ENCODE measurements at regions of chr17 and their contacts with region 1.

Region 1: DNA sequence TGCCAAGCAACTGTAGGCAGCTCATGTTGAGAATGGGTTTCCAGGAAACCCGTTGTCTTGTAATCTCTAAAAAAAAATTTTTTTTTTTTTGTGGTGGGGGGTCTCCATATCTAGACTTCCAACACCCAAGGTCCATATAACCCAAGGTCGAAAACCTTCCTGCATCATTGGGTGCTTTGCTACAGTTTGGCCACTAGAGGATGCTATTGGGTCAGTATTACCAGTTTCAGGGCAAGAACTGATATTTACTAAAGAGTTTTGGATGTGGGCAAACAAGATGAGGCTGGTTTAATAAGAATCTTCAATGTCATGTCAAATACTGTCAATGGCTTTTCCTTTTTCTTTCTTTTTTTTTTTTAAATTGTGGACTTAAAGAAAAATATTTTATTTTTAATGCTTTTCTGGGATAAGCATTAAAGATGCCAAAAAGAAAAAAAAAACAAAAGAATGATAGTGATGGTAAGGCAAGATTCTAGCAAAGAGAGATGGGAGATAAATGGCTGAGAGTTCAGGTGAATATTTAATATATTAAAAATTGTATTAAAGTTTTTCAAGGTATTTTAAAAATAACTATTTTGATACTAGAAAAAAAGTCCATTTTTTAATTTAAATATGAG is 62.2 kb downstream of the DHRS7C start:
- DNase-seq: no peak
- ATAC-seq: peak; percentile 63

Region 2: DNA sequence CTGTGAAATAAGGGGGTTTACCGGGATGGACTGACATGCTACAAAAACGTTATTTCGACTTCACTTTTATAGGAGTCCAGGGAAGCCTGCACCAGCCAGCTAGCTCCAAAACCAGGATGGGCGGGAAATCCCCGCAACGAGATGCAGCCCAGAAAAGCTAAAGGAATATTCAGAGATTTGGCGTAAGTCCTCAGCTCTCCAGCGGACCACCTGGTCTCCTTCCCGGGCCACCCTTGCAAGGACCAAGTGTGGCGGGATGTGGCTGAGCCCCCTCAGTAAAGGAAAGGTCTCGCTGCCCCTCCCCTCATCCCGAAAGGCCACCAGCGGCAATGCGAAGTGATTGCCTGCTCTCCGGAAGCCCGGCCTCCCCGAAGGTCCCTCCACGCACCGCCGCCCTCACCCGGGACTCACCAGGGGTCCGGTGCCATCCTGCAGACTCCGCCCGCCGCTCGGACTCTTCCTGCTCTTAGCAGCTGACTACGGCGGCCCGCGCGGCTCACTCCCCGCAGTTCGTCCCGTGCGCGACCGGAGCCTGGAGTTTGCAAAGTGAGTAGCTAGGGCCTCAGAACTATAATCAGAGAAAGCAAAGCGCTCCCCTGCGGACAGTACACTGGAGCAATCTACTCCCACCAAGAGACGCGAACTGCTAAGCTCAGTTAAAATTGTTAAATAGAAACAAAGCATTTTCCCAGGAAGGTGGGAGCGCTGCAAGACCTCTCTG is 153.6 kb before region 1 on chr17 and contains the start of gene STX8:
- intact Hi-C with region 1: loop called (anchors 5 kb)
- DNase-seq: peak; percentile 96
- ATAC-seq: peak; percentile 96
- total RNA-seq, gene STX8: 60.8 TPM

Region 3: GRCh38 chr17:9768381-9768934 is 39.3 kb after region 1 on chr17:
- intact Hi-C with region 1: loop called (anchors 5 kb)
- DNase-seq: no peak
- ATAC-seq: no peak

Region 4: DNA sequence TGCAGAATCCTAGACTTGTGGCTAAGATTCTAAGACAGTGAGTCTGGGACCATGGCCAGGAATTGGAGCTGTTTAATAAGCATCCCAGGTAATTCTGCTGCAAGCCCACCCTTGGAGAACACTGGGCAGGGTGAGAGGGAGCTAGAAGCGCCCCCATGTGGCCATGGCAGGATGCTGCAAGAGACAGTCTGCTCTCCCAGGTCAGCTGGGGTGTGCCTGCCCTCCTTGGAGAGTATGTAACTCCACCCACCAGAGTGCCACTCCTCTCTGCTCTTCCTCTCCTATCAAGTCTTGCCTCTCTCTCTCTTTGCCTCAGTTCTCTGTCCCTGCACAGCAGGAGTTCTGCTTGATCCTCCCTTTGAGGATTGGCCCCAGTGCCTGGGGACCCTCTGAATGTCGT is 161.0 kb after region 1 on chr17:
- intact Hi-C with region 1: loop called (anchors 2 kb)
- DNase-seq: no peak
- ATAC-seq: peak; percentile 68

Measured in Right ventricle myocardium inferior (tissue), 1 donor.